Heart right ventricle (tissue), 16 donors: ENCODE measurements at regions of chr10 and their contacts with region 1.

Region 1: DNA sequence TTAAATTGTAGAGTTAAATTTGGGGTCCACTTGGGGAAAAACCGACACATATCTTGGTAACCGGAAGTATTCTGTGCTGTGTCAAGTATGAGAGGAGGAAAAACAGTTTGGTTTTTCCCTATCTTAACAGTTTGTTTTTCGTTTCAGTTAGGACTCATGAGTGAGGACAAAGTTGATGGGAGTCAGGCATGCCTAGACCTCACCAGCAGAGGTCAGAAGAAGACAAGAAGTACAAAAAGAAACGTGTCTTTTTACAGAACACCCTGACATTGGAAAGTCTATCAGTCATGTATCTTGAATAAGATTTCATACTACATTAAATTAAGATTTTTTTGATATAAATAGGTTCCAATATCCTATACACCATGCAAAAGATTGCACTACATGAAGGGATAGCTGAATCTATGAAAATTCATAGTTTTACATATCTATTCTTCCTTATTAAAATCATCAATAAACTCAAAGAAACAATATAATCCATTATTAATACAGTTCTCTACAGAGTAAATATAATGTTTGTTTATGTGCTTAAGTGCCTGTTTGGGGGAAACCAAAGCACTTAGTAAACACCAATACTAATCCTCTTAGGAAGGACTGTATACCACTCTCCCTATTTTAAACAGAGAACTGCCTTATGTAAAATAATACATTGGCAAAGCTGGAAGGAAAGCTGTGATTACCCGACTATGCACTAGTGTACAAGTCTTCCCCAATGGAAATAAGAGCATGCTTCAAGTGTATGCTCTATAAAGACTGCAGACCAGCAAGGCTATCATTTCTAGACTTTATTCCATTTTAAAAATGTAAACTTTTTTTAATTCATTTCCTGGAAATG is 95.6 kb downstream of the USP6NL start:
- DNase-seq: peak in 1 of 2 donors; percentile 44
- ATAC-seq: peak; percentile 53 to 92 (median 84)
- H3K4me3 ChIP-seq: no peak overlapping the region
- H3K27ac ChIP-seq: no peak overlapping the region
- H3K4me1 ChIP-seq: peaks cover 0 to 17% (median 8%) of the 10 kb centered on the region in 9 donors
- H3K27me3 ChIP-seq: no peaks in the 10 kb centered on the region
- CTCF ChIP-seq: peak; percentile 68 to 93 (median 90)

Region 2: DNA sequence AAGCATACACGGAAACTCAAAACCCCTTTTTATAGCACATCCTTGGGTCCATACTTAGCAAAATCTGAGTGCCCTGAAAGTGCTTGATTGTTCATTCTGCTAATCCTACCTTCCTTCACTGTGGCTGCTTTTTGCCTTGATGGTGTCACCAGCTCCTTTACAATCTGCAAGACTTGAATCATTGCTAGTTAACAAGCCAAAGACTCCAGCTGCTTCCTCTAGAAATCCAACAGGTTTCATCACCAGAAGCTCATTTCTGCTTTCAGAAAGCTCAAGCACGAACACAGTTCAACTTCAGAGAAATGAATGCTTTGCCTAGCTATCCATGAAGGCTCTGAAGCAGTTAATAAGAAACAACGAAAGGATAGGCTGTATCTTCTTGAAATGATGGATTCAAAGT is 57.7 kb after region 1 on chr10:
- intact Hi-C with region 1: loop called in 1 of 10 experiments (anchors 10 kb)
- DNase-seq: no peak
- ATAC-seq: peak in 2 of 8 donors; percentile 20 to 39
- H3K4me3 ChIP-seq: no peak overlapping the region
- H3K27ac ChIP-seq: no peak overlapping the region
- H3K4me1 ChIP-seq: peaks cover 0 to 22% (median 6%) of the 10 kb centered on the region in 9 donors
- H3K27me3 ChIP-seq: no peaks in the 10 kb centered on the region
- CTCF ChIP-seq: no peak

Region 3: GRCh38 chr10:11724938-11725776 is 209.3 kb after region 1 on chr10:
- intact Hi-C with region 1: loop called (anchors 1 to 5 kb)
- DNase-seq: peak in 1 of 2 donors; percentile 27
- ATAC-seq: peak; percentile 62 to 86 (median 79)
- H3K4me3 ChIP-seq: no peak overlapping the region
- H3K27ac ChIP-seq: no peak overlapping the region
- H3K4me1 ChIP-seq: peaks cover 0 to 6% (median 0%) of the 10 kb centered on the region in 9 donors
- H3K27me3 ChIP-seq: no peaks in the 10 kb centered on the region
- CTCF ChIP-seq: peak; percentile 48 to 83 (median 74)

Region 4: DNA sequence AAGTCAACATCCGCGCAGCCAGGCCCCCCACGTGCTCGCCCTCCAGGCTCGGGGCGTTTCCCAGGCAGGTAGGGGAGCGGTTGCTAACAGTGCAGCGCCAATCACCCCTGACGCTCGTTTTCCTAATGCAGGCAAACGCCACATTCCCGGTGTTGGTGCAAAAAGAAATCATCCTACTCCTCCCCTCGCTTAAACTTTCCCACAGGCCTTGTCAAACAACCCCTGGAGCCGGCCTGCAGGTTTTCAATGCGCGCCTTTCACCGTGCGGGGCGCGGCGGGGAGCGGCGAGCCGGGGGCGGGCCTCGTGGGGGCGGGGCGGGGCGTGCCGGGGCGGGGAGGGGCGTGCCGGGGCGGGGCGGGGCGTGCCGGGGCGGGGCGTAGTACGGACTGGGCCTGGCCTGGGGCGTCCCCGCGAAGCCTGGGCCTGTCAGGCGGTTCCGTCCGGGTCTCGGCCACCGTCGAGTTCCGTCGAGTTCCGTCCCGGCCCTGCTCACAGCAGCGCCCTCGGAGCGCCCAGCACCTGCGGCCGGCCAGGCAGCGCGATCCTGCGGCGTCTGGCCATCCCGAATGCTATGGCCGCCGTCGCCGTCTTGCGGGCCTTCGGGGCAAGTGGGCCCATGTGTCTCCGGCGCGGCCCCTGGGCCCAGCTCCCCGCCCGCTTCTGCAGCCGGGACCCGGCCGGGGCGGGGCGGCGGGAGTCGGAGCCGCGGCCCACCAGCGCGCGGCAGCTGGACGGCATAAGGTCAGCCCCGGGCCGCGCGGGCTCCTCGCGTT is 226.4 kb after region 1 on chr10 and contains the start of gene ECHDC3:
- intact Hi-C with region 1: loop called in 2 of 10 experiments (anchors 5 kb)
- DNase-seq: peak; percentile 61 to 75
- ATAC-seq: peak; percentile 66 to 91 (median 83)
- H3K4me3 ChIP-seq: peak within 1 kb of the TSS; percentile 36 to 69 (median 64)
- H3K27ac ChIP-seq: peak within 1 kb of the TSS; percentile 86 to 97 (median 94)
- H3K4me1 ChIP-seq: peaks cover 0 to 38% (median 18%) of the 10 kb centered on the region in 9 donors
- H3K27me3 ChIP-seq: peaks cover 0 to 9% (median 0%) of the 10 kb centered on the region in 7 donors
- CTCF ChIP-seq: no peak
- total RNA-seq, gene ECHDC3: 39.6 to 114 (median 57.1) TPM

Region 5: GRCh38 chr10:11757821-11758463 is 242.1 kb after region 1 on chr10:
- intact Hi-C with region 1: loop called (anchors 1 to 10 kb)
- DNase-seq: peak; percentile 86 to 88
- ATAC-seq: peak; percentile 83 to 93 (median 89)
- H3K4me3 ChIP-seq: no peak overlapping the region
- H3K27ac ChIP-seq: peak overlapping the region; percentile 44 to 81 (median 68)
- H3K4me1 ChIP-seq: peaks cover 7 to 60% (median 33%) of the 10 kb centered on the region in 9 donors
- H3K27me3 ChIP-seq: no peaks in the 10 kb centered on the region
- CTCF ChIP-seq: peak; percentile 72 to 93 (median 92)